GM12878 (cell line): ENCODE measurements at regions of chr1 and their contacts with region 1.

Region 1: DNA sequence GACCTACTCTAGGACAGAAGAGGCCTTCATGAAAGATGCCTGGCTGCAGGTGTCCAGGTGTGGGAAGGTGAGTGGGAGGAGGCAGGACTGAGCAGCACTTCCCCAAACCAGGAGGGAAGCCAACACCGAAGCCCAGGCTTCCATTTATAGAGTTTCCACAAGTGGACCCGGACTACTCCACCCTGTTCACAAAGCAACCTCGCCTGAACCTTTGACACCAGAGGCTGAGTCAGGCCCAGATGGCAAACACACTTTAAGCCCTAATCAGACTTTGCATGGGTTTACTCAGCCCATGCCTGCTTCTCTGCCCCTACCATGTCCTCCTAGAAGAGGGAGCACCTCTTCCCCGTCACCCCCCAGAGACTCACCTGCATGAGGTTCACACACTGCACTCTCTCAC is 14.0 kb downstream of the PRR9 start:
- DNase-seq: no peak
- ATAC-seq: no peak
- H3K4me3 ChIP-seq: no peak overlapping the region
- H3K27ac ChIP-seq: no peak overlapping the region
- H3K4me1 ChIP-seq: no peaks in the 10 kb centered on the region
- H3K27me3 ChIP-seq: no peaks in the 10 kb centered on the region; a peak in 1 of 4 replicates
- CTCF ChIP-seq: no peak
- EP300 ChIP-seq: no peak
- POLR2A ChIP-seq: no peak
- RAD21 ChIP-seq: no peak

Region 2: DNA sequence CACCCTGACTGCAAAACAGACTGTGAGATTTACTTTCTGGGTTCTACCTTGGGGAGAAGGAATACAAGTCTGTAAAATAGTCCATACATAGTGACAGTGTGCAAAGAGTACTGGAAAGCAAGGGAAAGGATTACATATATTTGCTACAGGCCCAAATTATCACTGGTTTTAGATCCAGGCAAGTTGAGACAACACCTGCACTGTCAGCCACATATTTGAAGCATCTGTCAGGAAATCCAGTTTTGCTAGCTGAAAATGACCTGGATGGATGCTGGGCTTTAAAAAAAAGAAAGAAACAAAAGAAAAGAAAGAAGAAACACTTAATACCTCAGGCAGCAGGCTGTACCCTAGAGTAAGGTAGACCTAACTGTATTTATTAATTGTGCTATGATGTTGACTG is 56.7 kb before region 1 on chr1:
- CTCF ChIA-PET with region 1: no interaction called
- POLR2A ChIA-PET with region 1: no interaction called
- RAD21 ChIA-PET with region 1: no interaction called
- SMC1A ChIA-PET with region 1: no interaction called
- in situ Hi-C with region 1: no loop called
- intact Hi-C with region 1: no loop called
- DNase-seq: no peak
- ATAC-seq: no peak
- H3K4me3 ChIP-seq: no peak overlapping the region
- H3K27ac ChIP-seq: no peak overlapping the region
- H3K4me1 ChIP-seq: no peaks in the 10 kb centered on the region
- H3K27me3 ChIP-seq: no peaks in the 10 kb centered on the region; a peak in 2 of 4 replicates
- CTCF ChIP-seq: no peak
- EP300 ChIP-seq: no peak
- POLR2A ChIP-seq: no peak
- RAD21 ChIP-seq: no peak

Region 3: DNA sequence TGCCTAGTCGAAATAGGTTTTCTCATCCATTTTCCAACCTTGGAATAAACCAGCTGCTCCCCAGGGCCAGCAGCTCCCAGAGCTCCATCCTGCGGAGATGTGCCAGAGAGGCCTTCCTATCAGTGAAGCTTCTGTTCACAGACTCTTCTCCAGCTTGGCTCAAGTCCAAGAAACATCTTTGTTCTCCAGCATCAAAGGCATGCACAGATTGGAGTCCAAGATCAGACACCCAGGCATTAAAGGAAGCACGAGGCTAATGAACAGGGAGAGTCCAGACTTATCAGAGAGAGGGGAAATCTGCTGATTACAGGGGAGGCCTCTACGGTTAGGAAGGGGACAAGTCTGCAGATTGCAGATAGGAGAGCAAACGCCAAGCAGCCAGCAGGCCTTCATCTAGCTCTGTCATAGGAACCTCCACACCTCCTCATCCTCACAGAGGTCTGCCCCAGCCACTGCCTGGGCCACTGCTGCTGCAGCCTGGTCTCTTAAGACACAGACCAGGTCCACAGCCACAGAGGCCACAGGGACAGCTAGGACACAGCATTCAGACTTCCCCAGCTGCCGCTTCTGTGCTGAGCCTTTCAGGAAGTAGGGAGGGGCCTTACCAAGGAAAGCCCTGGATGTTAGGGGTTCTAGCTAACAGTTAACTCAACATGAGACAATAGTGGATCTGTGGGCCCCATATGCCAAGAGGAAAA is 10.6 kb before region 1 on chr1:
- CTCF ChIA-PET with region 1: interaction called, 28 read pairs
- POLR2A ChIA-PET with region 1: no interaction called
- RAD21 ChIA-PET with region 1: interaction called, 8 read pairs
- SMC1A ChIA-PET with region 1: interaction called, 19 read pairs
- in situ Hi-C with region 1: no loop called
- intact Hi-C with region 1: no loop called
- DNase-seq: no peak
- ATAC-seq: no peak
- H3K4me3 ChIP-seq: no peak overlapping the region
- H3K27ac ChIP-seq: no peak overlapping the region
- H3K4me1 ChIP-seq: no peaks in the 10 kb centered on the region
- H3K27me3 ChIP-seq: peaks cover 0 to 2% of the 10 kb centered on the region in 2 experiments; a peak in 1 of 4 replicates
- CTCF ChIP-seq: no peak
- EP300 ChIP-seq: no peak
- POLR2A ChIP-seq: no peak
- RAD21 ChIP-seq: no peak

Region 4: GRCh38 chr1:153261281-153262069 is 30.1 kb after region 1 on chr1:
- CTCF ChIA-PET with region 1: interaction called, 38 read pairs
- POLR2A ChIA-PET with region 1: interaction called, 9 read pairs
- RAD21 ChIA-PET with region 1: interaction called, 31 read pairs
- SMC1A ChIA-PET with region 1: interaction called, 25 read pairs
- in situ Hi-C with region 1: no loop called
- intact Hi-C with region 1: no loop called
- DNase-seq: no peak
- ATAC-seq: peak; percentile 26
- H3K4me3 ChIP-seq: peak overlapping the region; percentile 50; the same call in 1 of the 2 replicates
- H3K27ac ChIP-seq: no peak overlapping the region
- H3K4me1 ChIP-seq: peaks cover 15% of the 10 kb centered on the region
- H3K27me3 ChIP-seq: 0 out of 4 replicates have a peak, but pooled peaks cover 0 to 4% of the 10 kb centered on the region in 2 experiments
- CTCF ChIP-seq: no peak
- EP300 ChIP-seq: no peak
- POLR2A ChIP-seq: no peak
- RAD21 ChIP-seq: no peak

Region 5: GRCh38 chr1:153277817-153278216 is 46.5 kb after region 1 on chr1:
- CTCF ChIA-PET with region 1: interaction called, 69 read pairs
- POLR2A ChIA-PET with region 1: interaction called, 3 read pairs
- RAD21 ChIA-PET with region 1: interaction called, 12 read pairs
- SMC1A ChIA-PET with region 1: interaction called, 23 read pairs
- in situ Hi-C with region 1: no loop called
- intact Hi-C with region 1: no loop called
- DNase-seq: no peak
- ATAC-seq: peak; percentile 99
- H3K4me3 ChIP-seq: no peak overlapping the region
- H3K27ac ChIP-seq: no peak overlapping the region
- H3K4me1 ChIP-seq: peaks cover under 1% of the 10 kb centered on the region; the same call in 1 of the 2 replicates
- H3K27me3 ChIP-seq: no peaks in the 10 kb centered on the region
- CTCF ChIP-seq: peak; percentile 87 to 91 (median 90)
- EP300 ChIP-seq: no peak
- POLR2A ChIP-seq: no peak
- RAD21 ChIP-seq: peak; percentile 70

Region 6: GRCh38 chr1:153302308-153302707 is 70.9 kb after region 1 on chr1:
- CTCF ChIA-PET with region 1: no interaction called
- POLR2A ChIA-PET with region 1: no interaction called
- RAD21 ChIA-PET with region 1: no interaction called
- SMC1A ChIA-PET with region 1: no interaction called
- in situ Hi-C with region 1: no loop called
- intact Hi-C with region 1: no loop called
- DNase-seq: no peak
- ATAC-seq: no peak
- H3K4me3 ChIP-seq: no peak overlapping the region
- H3K27ac ChIP-seq: no peak overlapping the region
- H3K4me1 ChIP-seq: no peaks in the 10 kb centered on the region
- H3K27me3 ChIP-seq: no peaks in the 10 kb centered on the region; a peak in 1 of 4 replicates
- CTCF ChIP-seq: no peak
- EP300 ChIP-seq: no peak
- POLR2A ChIP-seq: no peak
- RAD21 ChIP-seq: no peak

Region 7: DNA sequence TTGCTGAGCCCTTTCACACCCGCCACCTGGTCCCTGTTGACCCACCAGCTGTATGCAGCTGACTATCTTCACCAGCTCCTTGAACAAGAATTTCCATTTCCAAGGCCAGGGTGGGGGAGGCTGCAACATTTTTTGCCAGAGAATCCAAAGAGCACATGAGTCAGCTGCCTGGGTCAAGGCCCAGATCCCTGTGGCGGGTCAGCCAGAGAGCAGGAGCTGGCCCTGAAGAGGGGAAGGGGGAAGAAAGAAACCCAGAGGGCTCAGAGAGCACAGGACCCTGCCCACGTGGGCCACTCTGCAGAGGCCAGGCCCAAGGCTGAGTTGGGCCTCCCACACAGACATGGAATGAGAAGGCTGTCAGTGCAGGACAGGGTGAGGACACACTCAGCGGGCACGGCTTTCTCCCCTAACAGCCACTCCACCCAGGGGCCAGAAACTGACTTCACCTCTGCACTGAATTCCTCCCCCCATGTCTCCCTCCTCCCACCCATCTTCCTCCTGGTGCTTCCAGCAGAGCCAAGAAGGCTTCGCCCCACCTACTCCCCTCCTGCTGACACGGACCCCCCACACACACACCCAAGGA is 275.6 kb after region 1 on chr1:
- CTCF ChIA-PET with region 1: no interaction called
- POLR2A ChIA-PET with region 1: no interaction called
- RAD21 ChIA-PET with region 1: no interaction called
- SMC1A ChIA-PET with region 1: no interaction called
- in situ Hi-C with region 1: no loop called
- intact Hi-C with region 1: no loop called
- DNase-seq: no peak
- ATAC-seq: no peak
- H3K4me3 ChIP-seq: no peak overlapping the region
- H3K27ac ChIP-seq: no peak overlapping the region
- H3K4me1 ChIP-seq: no peaks in the 10 kb centered on the region
- H3K27me3 ChIP-seq: no peaks in the 10 kb centered on the region
- CTCF ChIP-seq: no peak
- EP300 ChIP-seq: no peak
- POLR2A ChIP-seq: no peak
- RAD21 ChIP-seq: no peak